Ovary (tissue), 10 donors: ENCODE measurements at regions of chr7 and their contacts with region 1.

Region 1: DNA sequence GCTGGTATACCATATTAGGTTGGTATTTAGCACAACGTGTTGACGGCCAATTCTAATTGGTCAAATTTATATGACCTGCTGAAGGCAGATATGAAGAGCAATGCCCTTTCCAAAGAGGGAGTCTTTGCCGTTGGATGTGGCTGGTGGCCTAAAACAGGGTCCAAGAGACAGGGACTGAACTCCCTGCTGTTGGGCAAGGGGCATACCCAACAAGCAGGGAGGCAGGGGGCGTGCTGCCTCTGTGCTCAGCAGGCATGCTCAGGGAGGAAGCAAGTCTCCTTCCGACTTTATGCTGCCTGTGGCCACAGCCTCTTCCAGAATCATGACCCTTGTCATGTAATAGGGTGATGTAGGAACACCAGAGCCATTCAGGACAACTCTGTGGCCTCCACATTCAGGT is 167.7 kb upstream of the NPVF start:
- DNase-seq: no peak
- H3K4me3 ChIP-seq: no peak overlapping the region
- H3K27ac ChIP-seq: no peak overlapping the region
- H3K4me1 ChIP-seq: peaks cover 8% of the 10 kb centered on the region
- H3K27me3 ChIP-seq: no peaks in the 10 kb centered on the region
- CTCF ChIP-seq: no peak
- EP300 ChIP-seq: no peak
- POLR2A ChIP-seq: no peak

Region 2: DNA sequence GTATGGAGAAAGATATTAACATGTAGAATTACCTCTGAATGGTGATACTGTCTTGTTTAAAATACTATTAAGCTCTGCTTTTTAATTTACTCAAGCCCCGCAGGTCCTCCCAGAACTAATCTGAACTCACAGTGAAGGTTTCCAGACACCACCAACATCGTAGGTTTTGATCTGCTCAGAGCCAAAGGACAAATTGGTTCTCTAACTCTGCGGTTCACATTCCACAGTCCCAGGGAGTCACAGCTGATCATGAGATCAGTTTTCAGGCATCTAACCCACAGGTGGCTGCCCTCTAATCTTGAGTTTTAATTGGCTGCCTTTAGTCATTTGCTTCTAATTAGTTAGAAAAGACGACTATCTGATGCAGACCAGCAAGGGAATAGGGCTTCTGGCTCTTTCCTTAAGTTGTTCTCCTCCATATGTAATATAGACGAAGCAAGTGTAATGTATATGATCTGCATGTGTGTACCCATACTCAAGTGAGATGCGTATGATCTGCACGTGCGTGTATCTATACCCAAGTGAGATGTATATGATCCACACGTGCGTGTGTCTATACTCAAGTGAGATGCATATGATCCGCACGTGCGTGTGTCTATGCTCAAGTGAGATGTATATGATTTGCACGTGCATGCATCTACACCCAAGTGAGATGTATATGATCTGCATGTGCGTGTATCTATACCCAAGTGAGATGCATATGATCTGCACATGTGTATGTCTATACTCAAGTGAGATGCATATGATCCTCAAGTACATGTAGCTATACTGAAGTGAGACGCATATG is 163.8 kb after region 1 on chr7:
- intact Hi-C with region 1: loop called in 2 of 4 experiments (anchors 2 to 5 kb)
- DNase-seq: no peak
- H3K4me3 ChIP-seq: no peak overlapping the region
- H3K27ac ChIP-seq: no peak overlapping the region
- H3K4me1 ChIP-seq: peaks cover 5% of the 10 kb centered on the region
- H3K27me3 ChIP-seq: no peaks in the 10 kb centered on the region
- CTCF ChIP-seq: no peak
- EP300 ChIP-seq: no peak
- POLR2A ChIP-seq: no peak